Caco-2 (cell line): ENCODE measurements at regions of chr6 and their contacts with region 1.

Region 1: GRCh38 chr6:79813854-79814709 is 133.3 kb downstream of the ELOVL4 start:
- DNase-seq: peak; percentile 70 to 78
- H3K4me3 ChIP-seq: no peak overlapping the region
- H3K4me3 Mint-ChIP-seq: no peak overlapping the region
- H3K27ac Mint-ChIP-seq: no peak overlapping the region
- H3K4me1 ChIP-seq: no peaks in the 10 kb centered on the region
- H3K4me1 Mint-ChIP-seq: no peaks in the 10 kb centered on the region
- H3K27me3 ChIP-seq: no peaks in the 10 kb centered on the region
- H3K27me3 Mint-ChIP-seq: no peaks in the 10 kb centered on the region
- CTCF ChIP-seq: peak; percentile 79 to 91

Region 2: DNA sequence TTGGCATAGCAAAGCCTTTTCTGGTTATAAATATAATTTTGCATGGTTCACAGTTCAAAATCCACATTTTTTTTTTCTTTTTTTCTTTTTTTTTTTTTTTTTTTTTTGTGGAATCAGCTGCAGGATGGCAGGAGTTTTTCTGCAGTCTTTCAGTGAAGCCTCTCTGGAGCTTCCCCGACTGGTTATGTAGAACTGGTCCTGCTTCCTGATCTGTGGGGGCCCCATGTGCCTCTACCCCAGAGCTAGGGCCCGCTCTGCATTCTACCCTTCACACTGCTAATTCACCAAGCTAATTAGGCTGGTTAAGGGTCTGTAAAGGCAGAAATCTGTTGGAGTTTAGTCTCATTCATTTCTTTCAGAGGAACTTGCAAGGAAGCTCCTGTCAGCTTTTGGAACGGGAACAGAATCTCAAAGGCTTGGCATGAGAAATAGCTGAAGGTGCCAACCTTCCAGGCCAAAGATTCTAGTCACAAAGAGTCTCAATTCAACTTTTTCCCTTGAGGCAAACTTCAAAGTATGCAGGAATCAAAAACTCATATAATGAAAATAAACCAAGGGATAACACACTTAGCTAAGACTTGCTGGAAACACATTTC is 625.1 kb before region 1 on chr6:
- CTCF ChIA-PET with region 1: no interaction called
- POLR2A ChIA-PET with region 1: no interaction called
- intact Hi-C with region 1: loop called (anchors 10 kb)
- DNase-seq: no peak
- H3K4me3 ChIP-seq: no peak overlapping the region
- H3K4me3 Mint-ChIP-seq: no peak overlapping the region
- H3K27ac Mint-ChIP-seq: no peak overlapping the region
- H3K4me1 ChIP-seq: no peaks in the 10 kb centered on the region; the same call in 1 of the 2 replicates
- H3K4me1 Mint-ChIP-seq: peaks cover 6% of the 10 kb centered on the region
- H3K27me3 ChIP-seq: no peaks in the 10 kb centered on the region
- H3K27me3 Mint-ChIP-seq: no peaks in the 10 kb centered on the region
- CTCF ChIP-seq: no peak

Region 3: DNA sequence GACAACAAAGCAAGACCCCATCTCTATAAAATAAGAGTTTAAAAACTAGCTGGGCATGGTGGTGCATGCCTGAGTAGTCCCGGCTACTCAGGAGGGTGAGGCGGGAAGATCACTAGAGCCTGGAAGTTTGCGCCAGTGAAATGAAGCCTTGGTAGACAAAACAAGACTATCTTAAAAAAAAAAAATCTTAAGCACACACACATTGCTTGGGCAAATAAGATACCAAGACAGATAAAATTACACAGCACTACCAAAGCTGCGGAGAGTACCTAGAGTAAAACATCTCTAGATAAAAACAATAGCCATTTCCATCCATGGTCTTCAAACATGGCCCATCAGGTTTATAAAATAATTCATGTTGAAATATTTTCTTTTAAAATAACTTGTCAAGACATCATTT is 320.0 kb before region 1 on chr6:
- CTCF ChIA-PET with region 1: no interaction called
- POLR2A ChIA-PET with region 1: no interaction called
- intact Hi-C with region 1: loop called (anchors 10 kb)
- DNase-seq: peak in 1 of 2 experiments; percentile 2
- H3K4me3 ChIP-seq: no peak overlapping the region
- H3K4me3 Mint-ChIP-seq: no peak overlapping the region
- H3K27ac Mint-ChIP-seq: peak overlapping the region; percentile 23
- H3K4me1 ChIP-seq: peaks cover 12% of the 10 kb centered on the region; the same call in 1 of the 2 replicates
- H3K4me1 Mint-ChIP-seq: peaks cover 7% of the 10 kb centered on the region
- H3K27me3 ChIP-seq: no peaks in the 10 kb centered on the region
- H3K27me3 Mint-ChIP-seq: no peaks in the 10 kb centered on the region
- CTCF ChIP-seq: no peak

Region 4: DNA sequence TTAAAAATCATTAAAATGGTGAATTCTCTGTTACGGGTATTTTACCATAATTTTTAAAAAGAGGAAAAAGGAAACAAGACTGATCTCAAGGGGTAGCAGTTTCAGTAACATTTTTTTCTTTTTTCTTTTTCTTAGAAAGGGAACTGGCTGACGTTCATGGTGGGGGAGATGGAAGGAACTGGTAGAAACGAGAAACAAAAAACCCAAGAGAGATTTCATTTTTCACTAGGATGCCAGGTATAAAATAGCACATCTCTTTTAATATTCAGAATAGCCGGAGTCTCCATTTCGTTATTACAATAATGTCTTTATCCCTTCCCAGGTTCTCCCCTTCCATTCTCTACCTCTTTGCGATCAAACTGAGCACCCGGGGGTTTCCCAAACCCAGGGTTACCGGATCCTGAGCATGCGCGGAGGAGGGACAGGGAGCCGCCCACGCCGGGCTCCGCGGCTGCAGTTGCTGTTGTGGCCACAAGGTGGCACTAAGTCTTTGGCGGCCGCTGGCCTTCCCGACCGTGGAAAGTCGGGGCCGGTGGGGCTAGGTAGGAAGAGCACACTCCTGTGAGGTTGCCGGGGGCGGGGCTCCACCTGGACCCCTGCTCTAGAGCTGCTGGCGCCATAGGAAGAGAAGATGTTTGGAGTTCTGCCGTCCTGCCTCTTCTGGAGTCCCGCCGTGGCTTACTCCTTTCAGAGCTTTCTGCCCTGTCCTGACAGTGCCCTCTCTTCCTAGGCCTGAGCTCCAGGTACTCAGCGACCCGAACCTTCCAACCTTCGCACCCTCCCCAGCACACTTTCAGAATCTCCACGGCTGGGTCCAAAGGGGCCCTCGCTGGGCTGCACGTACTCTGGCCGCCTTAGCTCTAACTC is 36.1 kb before region 1 on chr6:
- CTCF ChIA-PET with region 1: no interaction called
- POLR2A ChIA-PET with region 1: no interaction called
- intact Hi-C with region 1: loop called (anchors 2 kb)
- DNase-seq: peak; percentile 48 to 76
- H3K4me3 ChIP-seq: no peak overlapping the region
- H3K4me3 Mint-ChIP-seq: peak overlapping the region; percentile 56
- H3K27ac Mint-ChIP-seq: no peak overlapping the region
- H3K4me1 ChIP-seq: no peaks in the 10 kb centered on the region
- H3K4me1 Mint-ChIP-seq: no peaks in the 10 kb centered on the region
- H3K27me3 ChIP-seq: no peaks in the 10 kb centered on the region
- H3K27me3 Mint-ChIP-seq: no peaks in the 10 kb centered on the region
- CTCF ChIP-seq: peak; percentile 75 to 81

Region 5: GRCh38 chr6:79869600-79870084 is 55.6 kb after region 1 on chr6:
- CTCF ChIA-PET with region 1: no interaction called
- POLR2A ChIA-PET with region 1: no interaction called
- intact Hi-C with region 1: loop called (anchors 2 kb)
- DNase-seq: peak; percentile 80 to 88
- H3K4me3 ChIP-seq: 0 out of 2 replicates have a peak overlapping the region, but pooled peaks have one; percentile 4
- H3K4me3 Mint-ChIP-seq: peak overlapping the region; percentile 42
- H3K27ac Mint-ChIP-seq: no peak overlapping the region
- H3K4me1 ChIP-seq: no peaks in the 10 kb centered on the region; the same call in 1 of the 2 replicates
- H3K4me1 Mint-ChIP-seq: peaks cover 25% of the 10 kb centered on the region
- H3K27me3 ChIP-seq: no peaks in the 10 kb centered on the region
- H3K27me3 Mint-ChIP-seq: no peaks in the 10 kb centered on the region
- CTCF ChIP-seq: peak; percentile 86 to 95